Caco-2 (cell line): ENCODE measurements at regions of chr1 and their contacts with region 1.

Region 1: DNA sequence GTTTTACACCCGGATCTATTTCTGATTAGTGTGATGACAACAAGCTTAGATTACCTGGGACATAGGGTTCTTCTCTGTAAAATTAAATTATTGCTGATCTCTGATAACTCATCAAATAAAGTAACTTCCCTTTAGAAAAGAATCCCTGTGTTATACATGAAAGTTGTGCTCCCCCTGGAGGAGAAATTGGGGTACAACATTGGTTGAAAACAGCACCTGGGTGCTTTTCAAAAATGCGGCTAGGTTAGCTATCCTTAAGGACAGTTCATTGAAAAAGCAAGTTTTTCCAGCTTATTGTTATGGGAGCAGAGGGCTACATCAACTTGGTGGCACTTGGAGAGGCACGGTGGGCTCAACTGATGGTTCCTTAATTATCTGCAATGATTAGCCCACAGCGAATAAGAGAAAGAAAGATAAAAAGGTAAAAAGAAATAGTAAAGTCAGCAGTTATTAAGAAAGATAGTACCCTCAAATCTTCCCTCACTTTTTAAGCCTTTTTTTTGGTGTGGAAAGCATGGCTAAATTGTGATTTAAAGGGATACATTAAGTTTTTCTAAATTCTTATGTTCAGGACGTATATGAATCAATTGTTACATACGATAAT is 97.8 kb downstream of the FMN2 start:
- DNase-seq: peak; percentile 35 to 45
- H3K4me3 ChIP-seq: no peak overlapping the region
- H3K4me3 Mint-ChIP-seq: no peak overlapping the region
- H3K27ac Mint-ChIP-seq: no peak overlapping the region
- H3K4me1 ChIP-seq: 0 out of 2 replicates have a peak, but pooled peaks cover 8% of the 10 kb centered on the region
- H3K4me1 Mint-ChIP-seq: peaks cover 5% of the 10 kb centered on the region
- H3K27me3 ChIP-seq: no peaks in the 10 kb centered on the region
- H3K27me3 Mint-ChIP-seq: peaks cover 11% of the 10 kb centered on the region
- CTCF ChIP-seq: peak; percentile 75 to 81

Region 2: GRCh38 chr1:240611619-240612480 is 422.4 kb after region 1 on chr1 and contains the start of gene GREM2:
- CTCF ChIA-PET with region 1: no interaction called
- POLR2A ChIA-PET with region 1: no interaction called
- intact Hi-C with region 1: loop called (anchors 2 kb)
- DNase-seq: peak; percentile 36 to 51
- H3K4me3 ChIP-seq: peak within 1 kb of the TSS; percentile 40
- H3K4me3 Mint-ChIP-seq: peak within 1 kb of the TSS; percentile 84
- H3K27ac Mint-ChIP-seq: peak within 1 kb of the TSS; percentile 40
- H3K4me1 ChIP-seq: peaks cover 11% of the 10 kb centered on the region; the same call in 1 of the 2 replicates
- H3K4me1 Mint-ChIP-seq: peaks cover 14% of the 10 kb centered on the region
- H3K27me3 ChIP-seq: no peaks in the 10 kb centered on the region; the same call in 1 of the 2 replicates
- H3K27me3 Mint-ChIP-seq: peaks cover 3% of the 10 kb centered on the region
- CTCF ChIP-seq: no peak
- total RNA-seq, gene GREM2: 0.36 and 0.51 TPM in 2 replicates